Ascending aorta (tissue), 2 donors: ENCODE measurements at regions of chr1 and their contacts with region 1.

Region 1: GRCh38 chr1:222465211-222466041 is 82.5 kb downstream of the HHIPL2 start:
- DNase-seq: peak; percentile 82 to 98
- H3K4me3 ChIP-seq: peak overlapping the region; percentile 57 to 62
- H3K27ac ChIP-seq: peak overlapping the region; percentile 90 to 93
- H3K4me1 ChIP-seq: peaks cover 0 to 11% of the 10 kb centered on the region in 2 donors
- H3K27me3 ChIP-seq: no peaks in the 10 kb centered on the region
- CTCF ChIP-seq: peak; percentile 96 to 100 (median 99)

Region 2: DNA sequence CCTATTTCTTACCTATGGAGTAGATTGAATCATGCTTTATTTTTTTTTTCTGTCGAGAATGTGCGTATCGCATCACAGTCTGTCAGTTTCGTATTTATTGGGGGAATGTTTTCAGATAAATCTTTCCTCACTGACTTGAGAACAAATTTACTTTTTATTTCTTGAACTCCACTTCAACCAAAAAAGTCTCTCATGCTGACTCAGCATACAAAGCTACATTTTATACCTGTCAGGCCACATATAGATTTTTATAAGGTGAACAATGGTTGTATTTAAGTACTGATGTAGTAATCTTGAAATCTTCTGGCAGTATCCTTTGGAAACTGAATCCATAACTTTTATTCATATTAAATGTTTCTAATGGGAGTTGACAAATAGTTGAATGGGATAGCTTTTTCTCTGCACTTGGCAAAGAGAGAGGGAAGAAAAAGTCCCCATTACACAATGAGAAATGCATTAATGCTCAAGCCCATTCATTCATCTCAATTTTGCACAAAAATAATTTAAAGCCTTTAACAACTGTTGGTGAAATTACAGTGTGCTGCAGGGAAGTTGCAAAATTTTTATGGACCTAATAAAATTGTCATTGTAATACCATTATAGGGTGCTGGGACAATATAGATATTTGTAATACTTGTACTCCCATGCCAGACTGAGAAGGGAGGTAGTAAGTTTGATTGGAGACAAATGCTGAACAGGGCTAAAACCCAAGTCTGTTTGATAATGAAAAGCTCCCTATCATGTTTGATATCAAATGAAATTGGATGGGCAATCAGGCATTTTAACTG is 1218.6 kb before region 1 on chr1:
- intact Hi-C with region 1: no loop called
- DNase-seq: no peak
- H3K4me3 ChIP-seq: no peak overlapping the region
- H3K27ac ChIP-seq: no peak overlapping the region
- H3K4me1 ChIP-seq: no peaks in the 10 kb centered on the region
- H3K27me3 ChIP-seq: no peaks in the 10 kb centered on the region
- CTCF ChIP-seq: no peak

Region 3: GRCh38 chr1:222546548-222547259 is 81.3 kb after region 1 on chr1:
- intact Hi-C with region 1: no loop called
- DNase-seq: no peak
- H3K4me3 ChIP-seq: no peak overlapping the region
- H3K27ac ChIP-seq: no peak overlapping the region
- H3K4me1 ChIP-seq: peaks cover 0 to 3% of the 10 kb centered on the region in 2 donors
- H3K27me3 ChIP-seq: no peaks in the 10 kb centered on the region
- CTCF ChIP-seq: no peak

Region 4: DNA sequence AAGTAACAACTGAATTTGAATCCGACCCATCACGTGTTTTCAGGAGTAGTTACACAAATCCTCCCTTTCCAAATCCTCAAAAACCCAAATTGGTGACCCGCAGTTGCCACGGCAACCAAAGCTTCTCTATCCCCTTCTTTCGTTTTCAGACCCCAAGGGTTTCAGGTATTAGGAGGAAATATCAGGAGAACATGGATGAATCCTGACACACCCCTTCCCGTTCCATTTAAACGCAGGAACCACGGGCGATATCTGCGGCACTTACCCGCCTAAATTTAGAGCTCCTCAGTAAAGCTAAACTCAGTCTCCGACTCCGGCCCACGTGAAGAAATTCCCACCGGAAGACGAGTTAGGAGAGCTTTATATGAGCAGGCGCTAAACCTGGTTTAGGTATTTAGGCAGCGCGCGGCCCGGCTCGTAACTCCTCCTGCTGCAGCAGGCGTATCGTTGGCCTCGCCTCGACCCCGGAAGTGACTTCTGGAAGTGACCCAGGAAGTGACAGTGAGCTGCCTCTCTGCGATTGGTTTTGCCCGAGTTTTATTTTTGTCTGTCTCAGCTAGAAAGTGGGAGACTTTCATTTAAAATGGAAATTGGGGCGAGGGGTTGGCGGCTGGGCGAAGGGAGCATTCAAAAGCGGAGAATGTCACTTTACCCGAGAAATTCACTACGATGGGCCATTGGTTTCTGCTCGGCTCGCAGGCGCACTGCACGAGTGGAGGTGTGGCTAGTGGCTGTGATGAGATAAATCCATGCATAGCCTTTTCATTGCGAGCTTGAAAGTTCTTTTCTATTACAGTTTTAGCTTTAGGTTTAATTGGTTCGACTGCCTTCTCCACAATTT is 124.3 kb after region 1 on chr1 and contains the start of gene TAF1A:
- intact Hi-C with region 1: loop called (anchors 1 kb)
- DNase-seq: peak; percentile 61 to 92
- H3K4me3 ChIP-seq: peak within 1 kb of the TSS; percentile 72
- H3K27ac ChIP-seq: peak within 1 kb of the TSS; percentile 80 to 85
- H3K4me1 ChIP-seq: peaks cover 3 to 13% of the 10 kb centered on the region in 2 donors
- H3K27me3 ChIP-seq: no peaks in the 10 kb centered on the region
- CTCF ChIP-seq: no peak
- total RNA-seq, gene TAF1A: 8.8 TPM

Region 5: GRCh38 chr1:222634180-222635013 is 169.0 kb after region 1 on chr1:
- intact Hi-C with region 1: loop called (anchors 1 kb)
- DNase-seq: peak in 1 of 2 donors; percentile 84
- H3K4me3 ChIP-seq: no peak overlapping the region
- H3K27ac ChIP-seq: peak overlapping the region in 1 of 2 donors; percentile 51
- H3K4me1 ChIP-seq: peaks cover 0 to 5% of the 10 kb centered on the region in 2 donors
- H3K27me3 ChIP-seq: no peaks in the 10 kb centered on the region
- CTCF ChIP-seq: peak; percentile 71 to 89 (median 75)

Region 6: GRCh38 chr1:222713091-222713961 is 247.9 kb after region 1 on chr1:
- intact Hi-C with region 1: loop called (anchors 1 kb)
- DNase-seq: peak; percentile 87 to 96
- H3K4me3 ChIP-seq: peak overlapping the region; percentile 80 to 89
- H3K27ac ChIP-seq: peak overlapping the region; percentile 96 to 99
- H3K4me1 ChIP-seq: peaks cover 0 to 15% of the 10 kb centered on the region in 2 donors
- H3K27me3 ChIP-seq: no peaks in the 10 kb centered on the region
- CTCF ChIP-seq: no peak

Region 7: DNA sequence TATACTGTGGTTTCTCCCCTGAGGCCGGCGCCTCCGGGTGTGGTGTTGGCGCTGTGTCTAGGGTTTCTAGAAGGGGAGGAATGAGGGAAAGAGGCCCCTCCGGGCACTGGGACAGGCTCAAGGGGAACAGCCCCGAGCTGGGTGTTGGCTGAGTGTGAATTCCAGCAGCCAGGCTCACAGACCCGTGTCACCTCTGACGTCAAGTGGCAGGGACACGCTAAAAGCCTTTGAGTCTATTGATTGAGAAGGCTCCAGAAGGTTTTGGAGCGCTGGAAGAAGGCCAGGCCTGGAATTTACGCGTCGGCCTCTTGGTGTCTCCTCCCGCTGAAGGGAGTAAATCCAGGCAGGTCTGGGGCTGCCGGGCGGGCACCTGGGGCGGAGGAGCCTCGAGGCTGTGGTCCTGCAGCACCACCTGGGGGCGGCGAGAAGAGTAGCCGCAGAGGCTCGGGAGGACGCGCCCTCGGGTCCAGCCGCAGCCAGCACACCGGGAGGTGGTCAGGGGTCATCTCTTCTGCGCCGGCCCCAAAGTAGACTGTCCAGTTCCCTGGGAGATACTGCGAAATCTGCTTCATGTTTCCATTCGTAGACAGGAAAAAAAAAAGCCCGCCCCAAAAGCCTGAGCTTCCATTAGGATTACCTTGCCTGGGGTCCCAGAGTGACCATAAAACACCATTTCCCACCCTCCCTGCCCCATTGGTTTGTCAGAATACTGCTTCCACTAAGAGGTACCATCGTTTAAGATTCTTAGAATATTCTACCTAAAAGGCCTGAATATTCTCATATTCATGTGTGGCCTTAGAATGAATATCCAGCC is 616.0 kb after region 1 on chr1:
- intact Hi-C with region 1: loop called (anchors 10 kb)
- DNase-seq: peak; percentile 55 to 90
- H3K4me3 ChIP-seq: peak overlapping the region; percentile 51 to 58
- H3K27ac ChIP-seq: peak overlapping the region; percentile 60 to 67
- H3K4me1 ChIP-seq: no peaks in the 10 kb centered on the region
- H3K27me3 ChIP-seq: no peaks in the 10 kb centered on the region
- CTCF ChIP-seq: peak; percentile 92 to 98 (median 98)

Region 8: DNA sequence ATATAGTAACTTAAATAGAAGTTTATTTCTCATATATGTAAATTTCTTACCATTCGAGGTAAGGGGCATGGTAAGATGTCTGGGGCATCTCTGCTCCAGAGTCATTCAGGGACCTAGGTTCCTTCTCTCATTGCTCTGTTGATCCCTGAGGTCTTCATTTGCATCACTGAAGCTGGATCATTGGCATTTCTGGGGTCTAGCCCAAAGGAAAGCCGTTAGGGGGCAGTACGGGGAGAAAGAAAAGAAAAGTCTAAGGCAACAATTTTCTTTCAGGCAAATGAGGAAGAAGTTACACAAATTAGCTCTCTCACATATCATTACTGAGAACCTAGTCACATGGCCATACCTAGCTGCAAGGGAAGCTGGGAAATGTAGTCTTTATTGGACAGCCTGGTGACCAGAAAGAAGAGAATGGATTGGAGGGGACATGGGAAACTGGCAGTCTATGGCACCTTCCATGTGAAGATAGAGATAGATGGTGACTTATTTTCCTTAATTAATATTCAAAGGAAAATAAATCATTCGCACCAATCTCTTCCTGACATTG is 908.7 kb after region 1 on chr1:
- intact Hi-C with region 1: no loop called
- DNase-seq: no peak
- H3K4me3 ChIP-seq: no peak overlapping the region
- H3K27ac ChIP-seq: no peak overlapping the region
- H3K4me1 ChIP-seq: no peaks in the 10 kb centered on the region
- H3K27me3 ChIP-seq: no peaks in the 10 kb centered on the region
- CTCF ChIP-seq: no peak